ENCODE measurements at regions of chr11 and their contacts with region 1.

Region 1: GRCh38 chr11:68459886-68460740 is 439 bp upstream of the PPP6R3 start:
- DNase-seq: peak; percentile 98

Region 2: DNA sequence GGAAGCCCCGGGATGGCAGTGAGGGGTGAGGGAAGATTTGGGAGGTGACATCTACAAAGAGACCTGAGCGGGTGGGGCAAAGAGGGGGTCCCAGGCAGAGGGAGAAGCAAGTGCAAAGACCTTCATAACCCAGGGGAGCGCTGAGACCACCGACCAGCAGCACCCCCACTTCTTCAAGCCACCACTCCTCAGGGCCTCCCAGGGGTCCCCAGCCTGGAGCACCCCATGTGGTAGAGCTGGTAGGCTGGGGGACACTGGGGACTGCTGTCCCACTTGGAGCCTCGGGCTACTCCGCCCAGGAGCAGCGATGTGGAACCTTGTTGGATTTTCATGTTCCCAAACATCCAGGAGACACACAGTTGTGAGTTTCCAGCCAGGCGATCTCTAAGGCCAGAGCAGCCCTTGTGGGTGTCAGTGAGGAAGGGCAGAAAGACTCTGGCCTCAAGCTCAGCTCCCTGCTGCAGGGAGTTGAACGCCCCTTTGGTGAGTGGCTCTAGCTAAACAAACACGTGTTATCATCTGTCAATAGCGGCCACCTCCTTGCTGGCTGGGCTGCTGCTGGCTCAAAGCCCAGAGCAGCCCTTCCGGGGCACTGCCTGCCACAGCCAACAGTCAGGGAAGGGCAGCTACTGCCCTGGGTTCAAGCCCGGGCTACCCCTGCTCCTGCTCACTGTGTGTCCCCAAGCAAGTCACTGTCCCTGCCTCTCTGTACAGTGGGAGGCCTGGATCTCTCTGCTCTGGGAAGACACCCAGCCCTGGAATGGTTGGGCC is 313.2 kb before region 1 on chr11:
- intact Hi-C with region 1: no loop called
- DNase-seq: no peak

Region 3: DNA sequence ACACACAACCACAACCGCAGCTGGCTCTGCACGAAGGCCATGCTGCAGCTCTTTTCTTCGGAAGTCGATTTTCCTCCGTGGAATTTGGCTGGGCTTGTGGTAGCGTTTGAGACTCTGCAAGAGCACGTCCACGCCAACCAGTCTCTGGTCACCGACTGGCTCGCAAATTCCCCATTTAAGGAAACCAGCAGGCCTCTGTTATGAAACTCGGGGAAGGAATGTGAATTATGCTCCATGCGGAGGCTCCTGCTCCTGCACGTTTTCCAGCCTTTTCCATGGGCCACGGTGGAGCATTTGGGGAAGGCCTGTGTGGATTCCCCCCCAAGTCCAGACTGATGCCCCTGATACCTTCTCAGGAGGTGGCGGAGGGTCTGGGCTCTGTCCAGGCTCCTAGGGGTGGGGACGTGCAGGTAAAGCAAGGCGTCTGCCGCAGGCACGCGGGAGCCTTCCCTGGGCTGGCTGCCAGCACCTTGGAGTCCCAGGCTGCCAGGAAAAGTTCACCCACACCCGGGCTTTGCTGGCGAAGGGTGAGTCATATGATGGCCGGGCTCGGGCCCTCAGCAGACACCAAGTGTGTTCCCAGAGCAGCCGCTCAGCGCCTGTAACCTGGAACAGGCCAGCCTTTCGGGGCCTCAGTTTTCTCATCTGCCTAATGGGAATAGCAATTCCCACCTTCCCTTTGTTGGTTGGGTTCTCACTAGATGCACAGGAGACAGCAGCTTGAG is 105.8 kb before region 1 on chr11:
- intact Hi-C with region 1: no loop called
- DNase-seq: peak; percentile 86

Region 4: GRCh38 chr11:68498321-68498720 is 38.2 kb after region 1 on chr11:
- intact Hi-C with region 1: loop called (anchors 5 kb)
- DNase-seq: no peak

Region 5: DNA sequence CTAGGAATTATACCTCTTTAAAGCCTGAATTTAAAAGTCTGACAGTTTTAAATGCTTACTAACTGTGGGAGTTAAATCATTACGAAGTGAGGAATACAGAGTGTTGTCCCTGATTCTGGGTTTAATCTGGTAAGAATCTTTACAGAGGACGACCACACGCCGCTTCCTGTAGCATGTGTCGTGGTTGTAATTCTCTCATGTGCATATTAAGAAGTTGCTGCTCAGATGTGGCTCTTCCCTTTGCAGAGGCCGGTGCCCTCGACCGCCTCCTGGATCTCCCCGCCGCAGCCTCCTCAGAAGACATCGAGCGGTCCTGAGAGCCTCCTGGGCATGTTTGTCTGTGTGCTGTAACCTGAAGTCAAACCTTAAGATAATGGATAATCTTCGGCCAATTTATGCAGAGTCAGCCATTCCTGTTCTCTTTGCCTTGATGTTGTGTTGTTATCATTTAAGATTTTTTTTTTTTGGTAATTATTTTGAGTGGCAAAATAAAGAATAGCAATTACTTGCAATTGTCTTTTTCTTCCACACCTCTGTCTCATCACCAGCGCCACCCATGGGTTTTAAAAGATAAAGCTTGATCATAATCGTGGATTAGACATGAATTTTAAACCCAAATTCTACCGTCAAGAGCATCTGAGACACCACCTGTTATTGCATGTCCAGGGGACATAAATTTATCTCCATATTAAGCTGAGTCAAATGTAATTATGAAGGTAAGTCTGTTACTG is 230.7 kb after region 1 on chr11:
- intact Hi-C with region 1: no loop called
- DNase-seq: no peak

Measured in cardiac septum (tissue), 1 donor.